ENCODE measurements at regions of chr2 and their contacts with region 1.

Region 1: GRCh38 chr2:159907909-159908308 is 109.9 kb upstream of the CD302 start:
- DNase-seq: no peak
- H3K4me3 ChIP-seq: no peak overlapping the region
- H3K27ac ChIP-seq: no peak overlapping the region
- H3K4me1 ChIP-seq: peaks cover 14% of the 10 kb centered on the region
- H3K27me3 ChIP-seq: no peaks in the 10 kb centered on the region
- CTCF ChIP-seq: no peak
- POLR2A ChIP-seq: no peak

Region 2: GRCh38 chr2:159850789-159851188 is 57.1 kb before region 1 on chr2:
- intact Hi-C with region 1: loop called (anchors 2 kb)
- DNase-seq: no peak
- H3K4me3 ChIP-seq: no peak overlapping the region
- H3K27ac ChIP-seq: no peak overlapping the region
- H3K4me1 ChIP-seq: no peaks in the 10 kb centered on the region
- H3K27me3 ChIP-seq: no peaks in the 10 kb centered on the region
- CTCF ChIP-seq: no peak
- POLR2A ChIP-seq: no peak

Region 3: DNA sequence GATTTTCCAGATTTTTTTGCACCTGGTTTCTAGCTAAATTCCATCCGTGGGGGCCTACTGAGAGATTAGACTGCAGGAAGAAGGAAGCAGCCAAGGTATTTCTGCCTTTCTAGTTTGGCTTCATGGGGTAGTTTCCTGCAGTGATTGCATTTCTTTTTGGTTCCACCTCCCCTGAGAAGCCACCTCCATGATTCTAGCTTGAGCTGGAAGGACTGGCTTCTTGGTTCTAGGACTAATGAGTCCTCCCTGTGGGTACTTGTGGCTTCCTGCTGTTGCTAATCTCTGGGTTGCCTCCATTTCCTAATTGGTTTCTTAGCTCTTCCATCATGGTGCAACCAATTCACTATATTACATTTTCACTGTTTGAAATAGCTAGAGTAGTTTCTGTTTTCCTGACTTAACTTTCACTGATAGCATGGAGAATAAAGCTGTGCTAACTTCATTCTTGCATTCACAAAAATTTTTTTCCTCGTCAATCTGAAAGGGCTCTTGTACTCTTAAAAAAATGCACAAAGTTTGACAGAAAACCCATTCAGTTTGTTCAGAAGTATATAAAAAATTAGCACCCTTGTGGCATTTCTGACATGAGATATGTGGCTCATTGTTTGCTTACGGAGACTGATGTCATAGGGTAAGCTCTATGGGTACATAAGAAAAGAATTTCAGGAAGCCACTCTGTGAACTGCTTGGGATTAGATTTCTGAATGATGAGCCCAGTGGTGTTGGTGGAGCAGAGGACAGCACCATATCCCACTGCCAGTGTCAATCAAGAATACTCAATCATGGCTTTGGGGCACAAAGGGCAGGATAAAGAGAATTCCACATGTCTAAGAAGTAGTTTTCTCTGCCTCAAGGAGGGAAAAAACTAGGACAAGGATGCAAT is 828.5 kb after region 1 on chr2:
- intact Hi-C with region 1: no loop called
- DNase-seq: no peak
- H3K4me3 ChIP-seq: no peak overlapping the region
- H3K27ac ChIP-seq: no peak overlapping the region
- H3K4me1 ChIP-seq: no peaks in the 10 kb centered on the region
- H3K27me3 ChIP-seq: no peaks in the 10 kb centered on the region
- CTCF ChIP-seq: no peak
- POLR2A ChIP-seq: no peak

Measured in vagina (tissue), 2 donors.